Esophagus muscularis mucosa (tissue), 4 donors: ENCODE measurements at regions of chr10 and their contacts with region 1.

Region 1: DNA sequence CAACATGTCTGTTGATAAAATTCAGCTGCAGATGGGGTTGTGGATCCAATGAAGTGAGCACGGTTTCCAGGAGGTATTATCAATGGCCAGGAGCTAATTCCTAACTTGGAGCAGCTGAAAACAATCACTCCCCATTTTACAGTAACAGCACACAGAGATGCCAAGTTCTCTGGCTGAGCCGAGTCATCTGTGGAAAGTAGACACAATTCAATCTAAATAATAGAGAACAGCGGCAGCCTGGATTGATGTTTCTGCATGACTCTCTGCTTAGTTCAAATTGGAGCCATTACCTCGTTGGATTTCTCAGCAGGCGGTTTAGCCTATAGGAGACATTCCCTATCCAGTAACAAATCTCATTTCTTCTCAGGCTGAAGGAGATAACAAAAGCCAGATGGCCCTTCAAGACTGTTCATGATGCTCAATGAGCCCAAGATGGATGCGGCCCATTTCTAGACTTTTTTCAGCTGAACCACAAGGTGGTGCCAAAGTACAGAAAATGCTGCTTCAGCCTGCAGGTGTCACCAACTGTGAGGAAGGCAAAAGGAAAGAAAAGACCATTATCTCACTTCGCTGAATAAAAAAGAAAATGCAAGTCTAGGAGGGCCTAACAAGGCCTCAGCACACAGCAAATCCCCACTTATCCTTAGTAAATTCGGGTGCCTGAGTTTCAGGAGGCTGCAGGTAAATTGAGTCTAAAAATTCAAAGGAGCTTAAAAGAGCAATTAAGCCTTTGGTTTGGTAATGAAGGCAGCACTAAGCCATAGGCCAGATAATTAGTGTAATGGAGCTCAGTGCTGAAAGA is 83.7 kb downstream of the SLC16A9 start:
- DNase-seq: no peak
- H3K4me3 ChIP-seq: peak overlapping the region in 1 of 4 donors; percentile 0
- H3K27ac ChIP-seq: peak overlapping the region in 2 of 4 donors; percentile 54
- H3K4me1 ChIP-seq: peaks cover 0 to 12% (median 5%) of the 10 kb centered on the region in 4 donors
- H3K27me3 ChIP-seq: no peaks in the 10 kb centered on the region
- CTCF ChIP-seq: peak; percentile 73 to 82 (median 75)
- EP300 ChIP-seq: no peak
- POLR2A ChIP-seq: no peak

Region 2: DNA sequence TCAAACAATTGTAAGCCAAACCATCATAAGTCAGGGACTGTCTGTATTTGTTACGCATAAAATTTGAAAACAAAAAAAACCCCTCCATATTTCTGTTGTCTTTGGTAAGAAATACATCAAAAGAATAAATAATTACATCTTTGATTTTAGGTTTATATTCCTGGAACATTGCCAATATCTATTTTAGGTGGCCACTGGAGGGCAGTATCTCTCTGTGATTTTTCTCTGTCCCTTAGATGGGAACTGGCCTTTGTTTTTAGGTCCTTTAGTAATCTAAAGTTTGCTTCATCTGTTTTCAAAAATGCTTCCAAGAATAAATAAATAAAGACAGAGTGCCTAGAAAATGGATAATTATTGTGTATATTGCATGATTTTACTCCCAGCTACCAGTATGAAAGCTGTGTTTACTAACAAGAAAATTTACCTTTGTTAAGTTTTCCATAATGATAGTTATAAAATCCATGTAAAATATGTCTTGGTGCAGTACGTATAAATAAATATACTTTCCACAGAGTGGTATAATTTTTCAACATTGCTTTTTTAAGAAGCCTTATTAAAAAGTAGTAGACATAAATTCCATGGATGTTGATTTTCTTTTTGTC is 385.2 kb before region 1 on chr10:
- intact Hi-C with region 1: loop called (anchors 2 kb)
- DNase-seq: no peak
- H3K4me3 ChIP-seq: no peak overlapping the region
- H3K27ac ChIP-seq: peak overlapping the region in 1 of 4 donors; percentile 20
- H3K4me1 ChIP-seq: peaks cover 5 to 29% (median 18%) of the 10 kb centered on the region in 4 donors
- H3K27me3 ChIP-seq: no peaks in the 10 kb centered on the region
- CTCF ChIP-seq: peak; percentile 66 to 67 (median 66)
- EP300 ChIP-seq: no peak
- POLR2A ChIP-seq: no peak

Region 3: GRCh38 chr10:59465088-59465487 is 160.8 kb before region 1 on chr10:
- intact Hi-C with region 1: no loop called
- DNase-seq: no peak
- H3K4me3 ChIP-seq: no peak overlapping the region
- H3K27ac ChIP-seq: no peak overlapping the region
- H3K4me1 ChIP-seq: peaks cover 0 to 5% (median 2%) of the 10 kb centered on the region in 4 donors
- H3K27me3 ChIP-seq: no peaks in the 10 kb centered on the region
- CTCF ChIP-seq: peak; percentile 40 to 46 (median 44)
- EP300 ChIP-seq: no peak
- POLR2A ChIP-seq: no peak

Region 4: DNA sequence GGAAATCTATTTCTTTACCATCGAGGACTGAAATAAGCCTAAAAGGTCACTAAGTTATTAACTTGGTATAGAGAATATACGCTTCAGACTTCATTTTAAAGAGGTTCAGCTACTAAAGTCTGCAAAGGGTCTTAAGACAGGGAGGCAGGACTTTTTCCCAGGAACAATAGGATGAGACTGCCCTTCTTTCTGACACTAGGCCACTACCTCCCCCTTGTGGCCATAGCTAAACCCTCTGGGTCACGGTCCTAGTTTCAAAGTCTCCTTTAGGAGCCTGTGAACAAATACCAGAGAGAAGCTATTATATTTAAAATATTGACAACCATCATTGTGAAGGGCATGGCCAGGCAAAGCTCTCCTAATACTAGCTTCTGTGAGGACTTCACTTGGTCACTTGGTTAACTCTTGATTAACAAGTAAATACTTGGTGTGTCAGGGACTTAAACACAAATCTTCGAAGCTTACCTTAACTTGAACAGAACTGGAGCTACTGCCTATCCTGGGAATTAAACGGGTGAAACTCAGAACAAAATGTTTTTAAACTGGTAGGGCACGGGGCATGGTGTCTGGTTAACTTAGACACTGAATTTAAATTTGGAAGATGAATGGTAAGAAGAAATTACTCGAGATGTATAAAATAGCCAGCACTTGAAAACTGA is 204.8 kb after region 1 on chr10:
- intact Hi-C with region 1: loop called (anchors 5 kb)
- DNase-seq: no peak
- H3K4me3 ChIP-seq: no peak overlapping the region
- H3K27ac ChIP-seq: no peak overlapping the region
- H3K4me1 ChIP-seq: peaks cover 9 to 59% (median 30%) of the 10 kb centered on the region in 4 donors
- H3K27me3 ChIP-seq: no peaks in the 10 kb centered on the region
- CTCF ChIP-seq: peak; percentile 60 to 80 (median 65)
- EP300 ChIP-seq: no peak
- POLR2A ChIP-seq: no peak

Region 5: GRCh38 chr10:60048091-60048501 is 422.2 kb after region 1 on chr10:
- intact Hi-C with region 1: loop called (anchors 5 kb)
- DNase-seq: no peak
- H3K4me3 ChIP-seq: no peak overlapping the region
- H3K27ac ChIP-seq: no peak overlapping the region
- H3K4me1 ChIP-seq: peaks cover 0 to 17% (median 13%) of the 10 kb centered on the region in 4 donors
- H3K27me3 ChIP-seq: no peaks in the 10 kb centered on the region
- CTCF ChIP-seq: peak; percentile 42 to 56 (median 46)
- EP300 ChIP-seq: no peak
- POLR2A ChIP-seq: no peak

Region 6: DNA sequence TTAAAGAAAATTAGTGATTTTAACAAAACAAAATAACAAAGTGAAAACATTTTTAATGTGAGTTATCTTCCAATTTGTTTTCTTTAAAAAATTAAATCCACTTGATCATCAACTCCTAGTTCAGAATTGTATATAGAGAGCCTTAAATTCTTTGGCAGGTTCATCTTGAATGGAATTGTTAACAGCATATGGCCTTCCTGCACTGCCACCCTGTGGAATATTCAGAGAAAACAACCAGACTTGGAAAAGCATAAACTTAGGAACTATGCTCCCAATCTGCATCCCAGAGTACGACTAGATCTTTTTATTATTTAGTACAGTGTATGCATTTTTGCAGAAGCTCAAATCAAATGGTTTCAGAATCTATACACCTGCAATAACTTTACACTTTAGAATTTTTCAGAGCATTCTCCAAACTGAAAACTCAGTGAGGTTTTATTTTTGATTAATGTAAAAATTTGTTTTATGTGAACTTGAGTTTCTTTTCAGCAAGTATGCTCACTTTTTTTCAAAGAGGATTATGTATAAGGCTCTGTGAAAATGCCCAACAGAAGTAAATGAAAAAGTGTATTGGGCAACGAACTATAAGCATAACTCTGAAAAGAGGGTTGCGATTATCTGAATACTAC is 808.6 kb after region 1 on chr10:
- intact Hi-C with region 1: loop called (anchors 5 kb)
- DNase-seq: no peak
- H3K4me3 ChIP-seq: no peak overlapping the region
- H3K27ac ChIP-seq: no peak overlapping the region
- H3K4me1 ChIP-seq: peaks cover 7 to 36% (median 31%) of the 10 kb centered on the region in 4 donors
- H3K27me3 ChIP-seq: no peaks in the 10 kb centered on the region
- CTCF ChIP-seq: peak; percentile 64 to 74 (median 73)
- EP300 ChIP-seq: no peak
- POLR2A ChIP-seq: no peak